ENCODE measurements at regions of chr22 and their contacts with region 1.

Region 1: DNA sequence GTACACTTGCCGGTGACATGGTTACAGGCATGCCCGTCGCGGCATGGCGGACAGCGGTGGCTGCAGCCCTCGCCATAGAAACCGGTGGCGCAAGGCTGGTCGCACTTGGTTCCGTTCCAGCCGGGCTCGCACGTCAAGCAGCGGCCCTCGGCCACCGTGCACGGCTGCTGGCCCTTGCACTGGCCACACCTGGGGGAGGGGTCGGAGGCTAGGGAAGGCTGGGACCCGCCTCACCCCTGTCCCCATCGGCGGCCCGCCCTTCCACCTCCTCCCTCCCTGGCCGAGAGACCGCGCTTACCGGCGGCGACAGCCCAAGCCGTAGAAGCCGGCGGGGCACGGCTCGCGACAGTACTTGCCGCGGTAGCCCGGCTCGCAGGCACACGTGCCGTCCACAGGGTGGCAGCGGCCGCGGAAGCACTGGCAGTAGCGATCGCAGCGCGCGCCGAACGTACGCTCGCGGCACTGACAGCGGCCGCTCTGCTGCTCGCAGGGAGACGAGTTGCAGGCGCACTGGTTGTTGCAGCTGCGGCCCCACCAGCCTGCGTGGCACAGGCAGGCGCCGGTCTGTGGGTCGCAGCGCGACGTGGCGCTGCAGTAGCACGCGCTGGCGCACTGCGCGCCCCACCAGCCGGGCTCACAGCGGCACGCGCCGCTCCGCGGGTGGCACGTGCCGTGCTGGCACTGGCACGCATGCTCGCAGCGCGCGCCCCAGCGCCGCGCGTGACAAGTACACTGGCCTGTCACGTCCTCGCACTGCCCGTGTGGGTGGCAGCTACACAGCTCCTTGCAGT is 6.7 kb downstream of the SCARF2 start:
- DNase-seq: no peak
- CTCF ChIP-seq: no peak

Region 2: GRCh38 chr22:20456064-20456721 is 25.3 kb after region 1 on chr22:
- CTCF ChIA-PET with region 1: interaction called, 25 read pairs
- POLR2A ChIA-PET with region 1: interaction called, 3 read pairs
- DNase-seq: peak; percentile 88
- CTCF ChIP-seq: peak; percentile 86